ENCODE measurements at regions of chr1 and their contacts with region 1.

Region 1: GRCh38 chr1:157380523-157380922 is 171.8 kb downstream of the FCRL5 start:
- DNase-seq: no peak
- H3K4me3 ChIP-seq: no peak overlapping the region
- H3K27me3 ChIP-seq: no peaks in the 10 kb centered on the region
- CTCF ChIP-seq: no peak

Region 2: GRCh38 chr1:157390651-157391050 is 10.1 kb after region 1 on chr1:
- CTCF ChIA-PET with region 1: no interaction called
- POLR2A ChIA-PET with region 1: no interaction called
- DNase-seq: peak; percentile 31
- H3K4me3 ChIP-seq: no peak overlapping the region
- H3K27me3 ChIP-seq: no peaks in the 10 kb centered on the region
- CTCF ChIP-seq: no peak

Region 3: DNA sequence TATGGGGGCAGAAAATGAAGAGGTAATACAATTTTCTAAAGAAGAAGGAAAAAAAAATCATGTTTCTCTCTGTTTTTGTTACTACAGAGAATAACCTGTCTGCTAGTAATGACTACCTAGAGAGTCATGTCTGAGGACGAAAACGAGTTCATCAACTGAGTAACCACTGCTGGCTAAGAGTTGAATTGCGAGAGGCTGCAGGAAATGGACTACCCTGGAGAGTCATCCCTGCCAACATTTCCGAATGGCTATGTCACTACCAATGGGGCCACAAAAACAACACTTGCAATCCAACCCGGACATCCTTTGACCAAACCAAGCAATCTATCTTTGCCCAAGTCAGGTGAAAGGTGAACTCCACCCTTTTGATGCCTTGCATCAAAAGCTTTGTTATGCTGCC is 51.2 kb after region 1 on chr1:
- CTCF ChIA-PET with region 1: no interaction called
- POLR2A ChIA-PET with region 1: no interaction called
- DNase-seq: no peak
- H3K4me3 ChIP-seq: no peak overlapping the region
- H3K27me3 ChIP-seq: no peaks in the 10 kb centered on the region
- CTCF ChIP-seq: no peak

Region 4: DNA sequence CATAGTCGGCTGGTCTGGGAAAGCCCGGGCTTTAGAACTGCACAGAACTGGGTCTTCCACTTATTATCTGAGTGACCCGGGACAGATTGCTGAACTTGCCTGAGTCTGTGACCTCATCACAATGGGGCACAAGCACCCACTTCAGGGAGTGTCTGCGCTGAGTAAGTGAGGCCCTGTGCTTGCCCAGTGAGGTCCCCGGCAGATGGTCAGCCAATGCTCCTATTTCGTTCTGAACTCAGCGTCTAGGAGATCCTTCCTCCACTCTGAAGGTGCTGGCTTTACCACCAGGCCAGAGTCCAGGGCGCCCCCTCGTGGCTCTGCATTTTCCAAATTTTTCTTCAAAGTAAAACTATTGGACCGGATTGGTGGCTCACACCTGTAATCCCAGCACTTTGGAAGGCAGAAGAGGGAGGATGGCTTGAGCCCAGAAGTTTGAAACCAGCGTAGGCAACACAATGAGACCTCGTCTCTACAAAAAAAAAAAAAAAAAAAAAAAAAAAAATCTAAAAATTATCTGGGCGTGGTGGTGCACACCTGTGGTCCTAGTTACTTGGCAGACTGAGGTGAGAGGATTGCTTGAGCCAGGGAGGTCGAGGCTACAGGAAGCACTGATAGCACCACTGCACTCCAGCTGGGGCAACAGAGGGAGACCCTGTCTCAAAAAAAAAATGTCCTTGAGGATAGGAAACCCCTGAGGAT is 110.1 kb after region 1 on chr1:
- CTCF ChIA-PET with region 1: interaction called, 24 read pairs
- POLR2A ChIA-PET with region 1: no interaction called
- DNase-seq: no peak
- H3K4me3 ChIP-seq: no peak overlapping the region
- H3K27me3 ChIP-seq: no peaks in the 10 kb centered on the region
- CTCF ChIP-seq: peak; percentile 78

Region 5: DNA sequence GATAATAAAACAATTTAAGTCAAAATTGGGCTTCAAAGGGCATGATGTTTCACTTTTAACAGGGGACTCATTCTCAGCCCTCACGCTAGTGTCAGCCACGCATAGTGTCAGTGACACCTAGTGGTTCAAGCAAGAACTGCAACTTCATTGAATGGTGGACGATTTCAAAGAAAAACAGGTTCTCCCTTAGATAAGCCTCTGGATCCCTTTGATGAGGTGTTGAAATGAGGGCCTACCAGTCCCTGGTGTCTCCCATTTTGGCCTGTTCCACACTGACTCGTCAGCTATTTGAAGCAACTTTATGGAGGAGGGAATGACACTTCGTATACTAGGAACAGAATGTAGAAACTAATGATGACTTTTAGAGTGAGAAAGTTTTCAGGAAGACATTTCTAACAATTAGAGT is 115.6 kb after region 1 on chr1:
- CTCF ChIA-PET with region 1: interaction called, 24 read pairs
- POLR2A ChIA-PET with region 1: no interaction called
- DNase-seq: no peak
- H3K4me3 ChIP-seq: no peak overlapping the region
- H3K27me3 ChIP-seq: 0 out of 2 replicates have a peak, but pooled peaks cover 2% of the 10 kb centered on the region
- CTCF ChIP-seq: peak; percentile 88

Region 6: DNA sequence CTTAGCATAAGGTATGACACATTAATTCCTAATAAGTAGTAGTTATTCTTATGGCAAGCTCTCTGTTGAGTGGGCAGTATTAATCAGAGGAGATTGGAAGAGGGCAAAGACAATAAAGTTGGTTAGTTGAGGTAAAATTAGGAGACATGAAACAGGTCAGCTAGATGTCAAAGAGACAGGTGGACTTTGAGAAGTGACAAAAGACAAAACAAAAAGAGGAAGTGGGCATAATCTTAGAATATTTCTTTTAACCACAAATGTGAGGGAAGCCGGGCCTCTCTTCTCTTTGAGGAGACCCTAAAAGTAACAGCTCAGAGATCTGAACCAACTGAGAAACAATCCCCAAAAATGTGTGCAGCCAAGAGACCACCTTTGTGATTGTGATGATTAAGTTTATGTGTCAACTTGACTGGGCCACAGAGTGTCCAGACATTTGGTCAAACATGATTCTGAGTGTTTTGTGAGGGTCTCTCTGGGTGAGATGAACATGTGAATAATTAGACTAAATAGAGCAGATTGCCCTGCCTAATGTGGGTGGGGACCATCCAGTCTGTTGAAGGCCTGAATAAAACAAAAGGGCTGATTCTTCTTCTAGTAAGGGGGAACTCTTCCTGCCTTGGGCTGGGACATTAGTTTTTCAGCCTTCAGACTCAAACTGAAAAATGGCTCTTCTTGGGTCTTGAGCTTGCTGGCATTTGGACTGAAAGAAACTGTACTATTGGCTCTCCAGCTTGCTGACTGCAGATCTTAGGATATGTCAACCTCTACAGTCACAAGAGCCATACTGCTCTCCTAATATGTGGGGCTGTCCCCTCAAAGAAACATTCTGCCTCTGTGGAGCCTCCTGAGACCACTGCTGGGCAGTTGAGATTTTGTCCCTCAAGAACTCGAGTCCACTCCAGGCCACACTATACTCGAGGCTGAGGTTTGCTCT is 131.8 kb after region 1 on chr1:
- CTCF ChIA-PET with region 1: no interaction called
- POLR2A ChIA-PET with region 1: no interaction called
- DNase-seq: no peak
- H3K4me3 ChIP-seq: no peak overlapping the region
- H3K27me3 ChIP-seq: no peaks in the 10 kb centered on the region; the same call in 1 of the 2 replicates
- CTCF ChIP-seq: no peak

Measured in BJ (cell line).